ENCODE measurements at regions of chr5 and their contacts with region 1.

Region 1: DNA sequence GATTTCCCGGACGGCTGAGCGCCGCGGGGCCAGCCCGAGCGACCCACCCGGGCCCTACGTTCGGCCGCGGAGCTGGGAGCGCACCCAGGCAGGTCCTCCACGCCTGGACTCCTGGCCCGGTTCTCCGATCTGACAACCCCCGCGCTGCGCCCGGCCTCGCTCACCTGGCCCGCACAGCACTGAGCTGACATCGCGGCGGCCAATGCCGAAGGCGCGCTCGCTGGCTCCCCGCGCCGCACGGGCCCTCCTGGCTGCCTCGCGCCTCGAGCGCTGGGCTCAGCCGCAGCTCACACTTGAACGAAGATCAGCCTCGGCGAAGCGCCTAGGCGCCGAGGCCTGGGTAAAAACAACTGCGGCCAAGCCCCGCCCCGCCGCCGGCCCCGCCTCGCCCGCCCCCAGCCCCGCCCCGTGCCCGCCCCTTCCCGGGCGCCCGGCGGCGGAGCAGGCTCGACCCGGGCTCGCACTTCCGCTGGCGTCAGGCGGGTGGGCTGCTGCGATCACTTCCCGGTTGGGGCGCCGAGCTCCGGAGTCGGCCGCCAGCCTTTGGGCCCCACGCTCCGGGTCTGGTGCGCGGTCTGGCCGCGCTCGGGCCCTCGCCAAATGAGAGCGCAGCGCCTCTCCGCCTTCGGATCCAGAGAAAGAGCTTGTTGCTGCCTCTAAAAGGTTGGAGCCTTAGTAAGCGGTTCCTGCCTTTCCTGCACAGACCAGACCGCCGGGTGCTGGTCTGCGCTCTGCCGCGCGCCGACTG is at the start of gene SERINC5:
- DNase-seq: peak; percentile 86
- H3K4me3 Mint-ChIP-seq: peak within 1 kb of the TSS; percentile 93
- H3K27ac Mint-ChIP-seq: peak within 1 kb of the TSS; percentile 91
- H3K4me1 Mint-ChIP-seq: peaks cover 45% of the 10 kb centered on the region
- H3K27me3 Mint-ChIP-seq: no peaks in the 10 kb centered on the region
- total RNA-seq, gene SERINC5: 59.1 to 60.6 TPM

Region 2: GRCh38 chr5:79990598-79991507 is 265.1 kb before region 1 on chr5 and contains the start of gene MTX3:
- CTCF ChIA-PET with region 1: no interaction called
- POLR2A ChIA-PET with region 1: interaction called, 10 read pairs
- DNase-seq: peak; percentile 91
- H3K4me3 Mint-ChIP-seq: peak within 1 kb of the TSS; percentile 90
- H3K27ac Mint-ChIP-seq: peak within 1 kb of the TSS; percentile 99
- H3K4me1 Mint-ChIP-seq: peaks cover 54% of the 10 kb centered on the region
- H3K27me3 Mint-ChIP-seq: no peaks in the 10 kb centered on the region
- total RNA-seq, gene MTX3: 22.8 TPM

Region 3: DNA sequence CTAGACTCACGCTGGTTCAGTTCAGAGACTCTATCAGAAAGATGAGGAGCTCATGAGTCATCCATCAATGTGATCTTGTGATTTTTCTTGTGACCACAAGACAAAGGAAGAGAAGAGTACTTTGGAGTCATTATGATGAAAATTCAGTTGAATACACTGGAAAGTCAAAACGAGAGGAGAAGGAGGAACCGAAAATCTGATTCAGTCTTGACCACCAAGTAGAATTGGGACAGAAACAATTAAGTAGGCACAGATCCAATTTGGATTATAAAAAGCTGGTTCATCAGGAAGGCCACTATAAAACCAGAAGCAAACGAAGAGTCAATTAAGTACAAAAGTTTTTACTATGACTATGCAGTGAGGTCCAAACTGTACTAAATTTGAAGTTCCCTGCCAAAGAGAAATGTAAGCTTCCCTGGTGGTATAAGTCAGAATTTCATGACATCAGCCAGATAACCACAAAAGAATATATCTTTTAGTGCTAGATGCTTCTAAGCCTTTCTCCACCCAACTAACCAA is 129.9 kb before region 1 on chr5:
- CTCF ChIA-PET with region 1: interaction called, 3 read pairs
- POLR2A ChIA-PET with region 1: interaction called, 20 read pairs
- DNase-seq: no peak
- H3K4me3 Mint-ChIP-seq: peak overlapping the region; percentile 1
- H3K27ac Mint-ChIP-seq: peak overlapping the region; percentile 75
- H3K4me1 Mint-ChIP-seq: peaks cover 38% of the 10 kb centered on the region
- H3K27me3 Mint-ChIP-seq: no peaks in the 10 kb centered on the region

Region 4: GRCh38 chr5:80153586-80154126 is 102.2 kb before region 1 on chr5:
- CTCF ChIA-PET with region 1: no interaction called
- POLR2A ChIA-PET with region 1: interaction called, 19 read pairs
- DNase-seq: no peak
- H3K4me3 Mint-ChIP-seq: no peak overlapping the region
- H3K27ac Mint-ChIP-seq: peak overlapping the region; percentile 71
- H3K4me1 Mint-ChIP-seq: peaks cover 47% of the 10 kb centered on the region
- H3K27me3 Mint-ChIP-seq: no peaks in the 10 kb centered on the region

Region 5: GRCh38 chr5:80204808-80205614 is 50.9 kb before region 1 on chr5:
- CTCF ChIA-PET with region 1: no interaction called
- POLR2A ChIA-PET with region 1: interaction called, 39 read pairs
- DNase-seq: no peak
- H3K4me3 Mint-ChIP-seq: no peak overlapping the region
- H3K27ac Mint-ChIP-seq: peak overlapping the region; percentile 55
- H3K4me1 Mint-ChIP-seq: peaks cover 60% of the 10 kb centered on the region
- H3K27me3 Mint-ChIP-seq: no peaks in the 10 kb centered on the region

Region 6: GRCh38 chr5:80268916-80269315 is 13.0 kb after region 1 on chr5:
- CTCF ChIA-PET with region 1: interaction called, 4 read pairs
- POLR2A ChIA-PET with region 1: interaction called, 170 read pairs
- DNase-seq: no peak
- H3K4me3 Mint-ChIP-seq: peak overlapping the region; percentile 44
- H3K27ac Mint-ChIP-seq: peak overlapping the region; percentile 91
- H3K4me1 Mint-ChIP-seq: peaks cover 33% of the 10 kb centered on the region
- H3K27me3 Mint-ChIP-seq: no peaks in the 10 kb centered on the region

Region 7: DNA sequence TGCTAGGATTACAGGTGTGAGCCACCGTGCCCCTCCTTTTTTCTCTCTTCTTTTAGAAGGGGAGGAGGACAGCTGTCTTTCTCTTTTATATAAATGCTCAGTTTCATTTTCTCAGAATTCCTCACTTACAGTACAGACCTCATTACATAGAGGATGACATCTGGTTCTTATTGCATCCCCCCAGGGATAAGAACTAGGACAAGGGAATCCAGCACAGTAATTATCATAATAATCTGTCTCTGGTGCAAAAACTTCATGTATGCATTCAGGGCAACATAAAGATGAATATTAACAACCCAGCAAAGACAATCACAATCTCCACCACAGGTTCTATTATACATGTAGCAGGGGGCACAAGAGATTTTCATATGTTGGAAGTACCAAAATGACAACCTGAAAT is 69.0 kb after region 1 on chr5:
- CTCF ChIA-PET with region 1: no interaction called
- POLR2A ChIA-PET with region 1: no interaction called
- DNase-seq: no peak
- H3K4me3 Mint-ChIP-seq: no peak overlapping the region
- H3K27ac Mint-ChIP-seq: no peak overlapping the region
- H3K4me1 Mint-ChIP-seq: no peaks in the 10 kb centered on the region
- H3K27me3 Mint-ChIP-seq: peaks cover 13% of the 10 kb centered on the region